ENCODE measurements at regions of chr19 and their contacts with region 1.

Region 1: DNA sequence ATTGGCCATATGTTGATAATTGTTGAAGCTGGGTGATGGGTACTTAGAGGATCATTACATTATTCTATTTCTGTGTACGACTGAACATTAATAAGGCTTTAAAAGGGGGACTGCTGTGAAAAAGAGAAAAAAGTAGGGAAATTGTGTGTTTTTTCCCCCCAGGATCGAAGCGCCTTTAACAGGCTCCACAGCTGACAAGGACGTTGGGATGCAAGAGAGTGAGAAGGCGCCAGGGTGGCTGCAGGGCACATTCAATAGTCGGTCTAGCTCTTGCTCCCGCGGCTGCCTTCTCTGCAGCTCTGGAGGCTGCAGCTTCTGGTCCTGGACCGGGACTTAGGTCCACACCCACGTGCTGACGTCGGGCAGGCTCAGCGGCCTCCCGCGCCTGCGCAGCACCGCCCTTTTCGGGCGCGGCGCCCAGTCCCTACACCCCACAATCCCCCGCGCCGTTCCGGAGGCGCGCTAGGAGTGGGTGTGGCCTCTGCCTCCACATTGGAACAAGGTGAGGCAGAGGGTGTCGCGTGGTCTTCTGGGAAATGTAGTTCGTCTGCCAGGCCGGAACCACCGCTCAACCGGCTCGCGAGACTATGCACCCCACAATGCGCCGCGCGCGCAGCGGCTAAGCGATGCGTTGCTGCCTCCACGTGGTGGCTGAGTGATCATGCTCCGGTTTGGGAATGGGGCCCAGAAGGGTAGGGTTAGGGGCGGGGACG is 4.9 kb upstream of the LRFN3 start:
- DNase-seq: peak; percentile 95 to 100 (median 100)
- ATAC-seq: peak; percentile 96 to 97
- H3K4me3 Mint-ChIP-seq: peak overlapping the region; percentile 69 to 85 (median 82)
- H3K27ac Mint-ChIP-seq: peak overlapping the region; percentile 72 to 95 (median 91)
- H3K4me1 Mint-ChIP-seq: peaks cover 20 to 57% (median 45%) of the 10 kb centered on the region in 4 donors
- H3K27me3 Mint-ChIP-seq: peaks cover 0 to 4% (median 0%) of the 10 kb centered on the region in 5 donors

Region 2: DNA sequence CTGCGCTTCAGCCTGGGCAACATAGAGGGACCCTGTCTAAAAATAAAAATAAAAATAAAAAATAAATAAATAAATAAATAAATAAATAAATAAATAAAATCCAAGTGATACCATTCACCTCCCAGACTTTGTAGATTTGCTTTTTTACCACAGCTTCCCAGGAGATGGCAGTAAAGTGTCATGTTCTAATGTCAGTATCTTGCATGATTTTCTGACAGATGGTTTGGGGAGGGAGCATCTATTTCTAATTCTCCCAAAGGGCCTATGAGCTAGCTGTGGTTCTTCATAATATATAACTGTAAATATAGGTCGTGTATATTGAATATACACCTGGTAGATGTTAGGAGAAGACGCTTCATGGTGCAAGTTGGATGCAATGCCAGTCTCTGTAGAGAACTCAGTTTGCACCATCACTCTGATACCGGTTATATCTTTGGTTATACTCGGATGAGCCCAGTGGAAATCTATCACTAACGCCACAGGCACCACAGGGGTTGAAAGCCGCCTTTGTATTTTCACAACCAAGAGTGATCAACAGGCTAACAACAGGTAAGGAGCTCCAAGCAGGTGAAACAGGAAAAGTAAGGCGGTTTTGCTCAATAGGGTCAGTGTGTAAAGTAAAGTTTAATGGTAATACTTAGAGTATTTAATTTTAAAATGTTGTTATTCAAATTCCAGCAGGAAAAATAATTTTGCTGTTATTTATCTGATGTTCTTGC is 49.0 kb before region 1 on chr19:
- POLR2A ChIA-PET with region 1: interaction called, 58 read pairs
- DNase-seq: peak in 8 of 10 donors; percentile 22 to 77 (median 52)
- ATAC-seq: peak; percentile 51 to 61
- H3K4me3 Mint-ChIP-seq: no peak overlapping the region
- H3K27ac Mint-ChIP-seq: peak overlapping the region in 1 of 10 donors; percentile 67
- H3K4me1 Mint-ChIP-seq: peaks cover 6 to 17% (median 13%) of the 10 kb centered on the region in 4 donors
- H3K27me3 Mint-ChIP-seq: peaks cover 5 to 30% (median 18%) of the 10 kb centered on the region in 5 donors

Region 3: GRCh38 chr19:35899547-35900214 is 31.6 kb before region 1 on chr19:
- POLR2A ChIA-PET with region 1: interaction called, 57 read pairs
- DNase-seq: peak; percentile 78 to 91 (median 84)
- ATAC-seq: peak; percentile 49 to 64
- H3K4me3 Mint-ChIP-seq: peak overlapping the region; percentile 90 to 100 (median 95)
- H3K27ac Mint-ChIP-seq: peak overlapping the region; percentile 94 to 99 (median 98)
- H3K4me1 Mint-ChIP-seq: peaks cover 28 to 74% (median 60%) of the 10 kb centered on the region in 4 donors
- H3K27me3 Mint-ChIP-seq: no peaks in the 10 kb centered on the region

Region 4: DNA sequence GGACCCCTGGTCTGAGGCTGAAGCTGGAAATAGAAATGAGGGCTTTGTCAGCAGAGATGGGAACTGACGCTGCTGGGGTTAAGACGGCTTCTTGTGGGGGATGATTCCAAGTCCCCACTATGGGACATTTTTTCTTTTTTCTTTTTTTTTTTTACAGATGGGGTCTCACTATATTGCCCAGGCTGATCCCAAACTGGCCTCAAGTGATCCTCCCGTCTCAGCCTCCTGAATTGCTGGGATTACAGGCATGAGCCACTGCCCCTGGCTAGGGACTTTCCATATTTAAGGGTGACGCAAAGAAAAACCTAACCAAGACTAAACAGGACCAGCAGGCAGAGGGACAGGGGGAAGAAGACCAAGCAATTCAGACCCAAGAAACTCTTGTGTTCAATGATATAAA is 14.9 kb after region 1 on chr19:
- POLR2A ChIA-PET with region 1: no interaction called
- DNase-seq: no peak
- ATAC-seq: no peak
- H3K4me3 Mint-ChIP-seq: no peak overlapping the region
- H3K27ac Mint-ChIP-seq: peak overlapping the region in 6 of 10 donors; percentile 17 to 91 (median 66)
- H3K4me1 Mint-ChIP-seq: peaks cover 22 to 52% (median 34%) of the 10 kb centered on the region in 4 donors
- H3K27me3 Mint-ChIP-seq: no peaks in the 10 kb centered on the region

Region 5: GRCh38 chr19:35963514-35963913 is 32.2 kb after region 1 on chr19:
- POLR2A ChIA-PET with region 1: no interaction called
- DNase-seq: peak in 6 of 10 donors; percentile 26 to 53 (median 38)
- ATAC-seq: no peak
- H3K4me3 Mint-ChIP-seq: no peak overlapping the region
- H3K27ac Mint-ChIP-seq: no peak overlapping the region
- H3K4me1 Mint-ChIP-seq: peaks cover 6 to 12% (median 10%) of the 10 kb centered on the region in 4 donors
- H3K27me3 Mint-ChIP-seq: peaks cover 0 to 11% (median 5%) of the 10 kb centered on the region in 5 donors

Measured in naive thymus-derived CD8-positive, alpha-beta T cell (primary cell).